HepG2 (cell line): ENCODE measurements at regions of chr20 and their contacts with region 1.

Region 1: DNA sequence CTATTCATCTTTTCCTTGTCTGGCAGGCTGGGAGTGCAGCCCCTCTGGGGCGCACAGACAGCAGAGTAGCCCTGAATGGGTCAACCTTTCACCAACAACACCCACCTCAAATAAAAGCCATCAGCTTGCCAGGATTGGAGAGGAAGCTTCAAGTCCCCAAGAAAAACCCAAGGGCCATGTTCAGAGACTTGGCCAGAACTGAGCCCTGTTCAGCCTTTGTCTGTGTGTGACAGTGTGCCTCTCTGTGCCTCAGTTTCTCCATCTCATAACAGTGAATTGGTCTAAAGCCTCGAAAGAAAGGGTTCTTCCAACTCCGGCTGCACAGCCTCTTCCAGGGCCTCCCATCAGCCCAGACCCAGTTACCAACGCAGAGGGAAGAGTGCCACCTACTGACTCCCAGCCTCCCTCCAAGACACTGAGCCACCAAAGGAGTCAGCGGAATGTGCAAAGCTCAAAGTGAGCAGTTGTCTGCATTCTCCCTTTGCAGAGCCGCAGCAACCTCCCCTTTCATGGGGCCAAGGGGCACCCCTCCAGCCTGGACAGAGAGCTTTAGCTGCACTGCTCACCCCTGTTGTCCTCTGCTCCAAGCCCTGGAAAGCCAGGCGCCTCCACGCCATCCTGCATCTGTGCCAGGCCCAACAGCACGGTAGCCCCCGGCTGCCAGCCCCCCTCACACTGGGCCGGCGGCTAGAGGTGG is 82.7 kb upstream of the TOP1 start:
- DNase-seq: peak; percentile 72
- ATAC-seq: peak; percentile 99
- H3K4me3 ChIP-seq: no peak overlapping the region
- H3K27ac ChIP-seq: no peak overlapping the region
- H3K4me1 ChIP-seq: peaks cover 11% of the 10 kb centered on the region
- H3K27me3 ChIP-seq: peaks cover 0 to 13% of the 10 kb centered on the region in 2 experiments; a peak in 2 of 5 replicates
- CTCF ChIP-seq: peak; percentile 98
- EP300 ChIP-seq: 0 out of 4 replicates have a peak, but pooled peaks of 1 of the 2 experiments have one; percentile 24
- POLR2A ChIP-seq: no peak
- RAD21 ChIP-seq: peak; percentile 93

Region 2: DNA sequence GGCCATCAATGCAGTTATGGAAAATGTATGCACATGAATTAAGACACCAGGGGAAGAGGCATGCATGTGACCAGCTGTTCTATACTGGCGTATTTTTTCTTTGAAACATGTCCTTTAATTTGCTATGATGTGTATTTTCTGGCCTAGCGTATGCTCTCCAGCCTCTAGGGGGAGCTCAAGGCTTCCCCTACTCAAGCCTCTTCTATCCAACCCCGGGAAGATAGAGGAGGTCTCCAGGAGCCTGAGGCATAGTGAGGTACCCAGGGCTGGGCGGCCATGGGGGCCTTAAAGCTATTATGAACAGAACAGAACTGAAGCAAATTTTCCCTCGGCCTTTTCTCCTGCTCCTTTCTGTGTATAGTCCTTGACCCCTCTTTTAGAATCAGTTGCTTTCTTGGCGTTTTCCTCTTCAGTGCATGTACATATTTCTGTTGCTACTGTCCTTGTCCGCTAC is 785.8 kb before region 1 on chr20:
- CTCF ChIA-PET with region 1: no interaction called
- POLR2A ChIA-PET with region 1: no interaction called
- in situ Hi-C with region 1: no loop called
- intact Hi-C with region 1: loop called (anchors 5 kb)
- DNase-seq: peak; percentile 60
- ATAC-seq: peak; percentile 99
- H3K4me3 ChIP-seq: no peak overlapping the region
- H3K27ac ChIP-seq: no peak overlapping the region
- H3K4me1 ChIP-seq: no peaks in the 10 kb centered on the region
- H3K27me3 ChIP-seq: no peaks in the 10 kb centered on the region
- CTCF ChIP-seq: peak; percentile 73
- EP300 ChIP-seq: no peak
- POLR2A ChIP-seq: no peak
- RAD21 ChIP-seq: no peak

Region 3: DNA sequence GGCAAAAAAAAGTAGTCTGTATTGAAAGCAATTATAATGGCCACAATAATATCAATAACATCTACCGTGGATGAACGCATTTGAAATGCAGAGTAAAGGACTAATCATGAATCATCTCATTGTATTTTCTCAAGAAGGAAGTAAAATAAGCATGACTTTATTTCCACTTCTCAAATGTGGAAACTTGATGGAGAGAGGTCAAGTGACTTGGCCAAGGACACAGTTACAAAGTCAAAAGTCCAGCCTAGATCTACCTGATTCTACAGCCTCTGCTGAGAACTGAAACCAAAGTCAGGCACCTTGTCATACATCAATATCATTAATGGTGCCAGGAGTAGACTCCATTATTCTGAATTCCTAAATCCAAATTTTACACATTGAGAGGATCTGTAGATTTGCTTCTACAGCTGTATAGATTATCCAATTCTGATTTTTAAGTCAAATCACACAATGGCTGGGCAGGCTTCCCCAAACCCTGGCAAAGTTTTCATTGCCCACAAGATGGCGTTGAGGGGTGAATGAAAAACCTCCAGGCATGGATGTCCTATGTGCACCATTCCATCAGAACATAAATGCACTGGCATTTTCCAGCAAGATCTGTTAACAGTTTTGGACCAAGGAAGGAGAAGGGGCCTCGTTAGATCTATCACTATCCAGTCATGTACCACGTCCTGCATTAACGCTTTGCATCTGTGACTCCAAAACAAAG is 679.9 kb before region 1 on chr20:
- CTCF ChIA-PET with region 1: no interaction called
- POLR2A ChIA-PET with region 1: no interaction called
- in situ Hi-C with region 1: no loop called
- intact Hi-C with region 1: loop called (anchors 5 kb)
- DNase-seq: peak; percentile 35
- ATAC-seq: peak; percentile 85
- H3K4me3 ChIP-seq: no peak overlapping the region
- H3K27ac ChIP-seq: no peak overlapping the region
- H3K4me1 ChIP-seq: no peaks in the 10 kb centered on the region
- H3K27me3 ChIP-seq: no peaks in the 10 kb centered on the region
- CTCF ChIP-seq: peak; percentile 56
- EP300 ChIP-seq: no peak
- POLR2A ChIP-seq: no peak
- RAD21 ChIP-seq: no peak; the same call in 1 of the 2 replicates

Region 4: GRCh38 chr20:40706977-40707582 is 238.8 kb before region 1 on chr20:
- CTCF ChIA-PET with region 1: no interaction called
- POLR2A ChIA-PET with region 1: no interaction called
- in situ Hi-C with region 1: no loop called
- intact Hi-C with region 1: loop called (anchors 2 kb)
- DNase-seq: peak; percentile 91
- ATAC-seq: peak; percentile 100
- H3K4me3 ChIP-seq: peak overlapping the region in 2 of 3 experiments; percentile 3 to 32; a peak in 2 of 6 replicates
- H3K27ac ChIP-seq: peak overlapping the region; percentile 19
- H3K4me1 ChIP-seq: peaks cover 21% of the 10 kb centered on the region
- H3K27me3 ChIP-seq: peaks cover 0 to 7% of the 10 kb centered on the region in 2 experiments; a peak in 2 of 5 replicates
- CTCF ChIP-seq: peak; percentile 65
- EP300 ChIP-seq: no peak; a peak in 2 of 4 replicates
- POLR2A ChIP-seq: no peak
- RAD21 ChIP-seq: peak; percentile 68; the same call in 1 of the 2 replicates

Region 5: GRCh38 chr20:40741507-40742106 is 204.3 kb before region 1 on chr20:
- CTCF ChIA-PET with region 1: interaction called, 11 read pairs
- POLR2A ChIA-PET with region 1: no interaction called
- in situ Hi-C with region 1: loop called (anchors 5 kb)
- intact Hi-C with region 1: loop called (anchors 1 kb)
- DNase-seq: peak; percentile 57
- ATAC-seq: peak; percentile 86
- H3K4me3 ChIP-seq: no peak overlapping the region
- H3K27ac ChIP-seq: no peak overlapping the region
- H3K4me1 ChIP-seq: no peaks in the 10 kb centered on the region
- H3K27me3 ChIP-seq: peaks cover 3 to 32% of the 10 kb centered on the region in 2 experiments; a peak in 3 of 5 replicates
- CTCF ChIP-seq: peak; percentile 83
- EP300 ChIP-seq: no peak
- POLR2A ChIP-seq: no peak
- RAD21 ChIP-seq: peak; percentile 59

Region 6: GRCh38 chr20:40797425-40797824 is 148.5 kb before region 1 on chr20:
- CTCF ChIA-PET with region 1: interaction called, 16 read pairs
- POLR2A ChIA-PET with region 1: no interaction called
- in situ Hi-C with region 1: loop called (anchors 5 kb)
- intact Hi-C with region 1: loop called (anchors 1 kb)
- DNase-seq: peak; percentile 41
- ATAC-seq: peak; percentile 87
- H3K4me3 ChIP-seq: no peak overlapping the region
- H3K27ac ChIP-seq: no peak overlapping the region
- H3K4me1 ChIP-seq: no peaks in the 10 kb centered on the region
- H3K27me3 ChIP-seq: no peaks in the 10 kb centered on the region
- CTCF ChIP-seq: peak; percentile 68
- EP300 ChIP-seq: no peak
- POLR2A ChIP-seq: no peak
- RAD21 ChIP-seq: no peak

Region 7: GRCh38 chr20:40802886-40803285 is 143.0 kb before region 1 on chr20:
- CTCF ChIA-PET with region 1: interaction called, 16 read pairs
- POLR2A ChIA-PET with region 1: no interaction called
- in situ Hi-C with region 1: loop called (anchors 5 kb)
- intact Hi-C with region 1: no loop called
- DNase-seq: no peak
- ATAC-seq: no peak
- H3K4me3 ChIP-seq: no peak overlapping the region
- H3K27ac ChIP-seq: no peak overlapping the region
- H3K4me1 ChIP-seq: no peaks in the 10 kb centered on the region
- H3K27me3 ChIP-seq: peaks cover 5 to 20% of the 10 kb centered on the region in 2 experiments; a peak in 4 of 5 replicates
- CTCF ChIP-seq: no peak
- EP300 ChIP-seq: no peak
- POLR2A ChIP-seq: no peak
- RAD21 ChIP-seq: no peak

Region 8: GRCh38 chr20:40880063-40880728 is 65.7 kb before region 1 on chr20:
- CTCF ChIA-PET with region 1: no interaction called
- POLR2A ChIA-PET with region 1: no interaction called
- in situ Hi-C with region 1: no loop called
- intact Hi-C with region 1: no loop called
- DNase-seq: no peak
- ATAC-seq: peak; percentile 52
- H3K4me3 ChIP-seq: no peak overlapping the region
- H3K27ac ChIP-seq: no peak overlapping the region
- H3K4me1 ChIP-seq: no peaks in the 10 kb centered on the region
- H3K27me3 ChIP-seq: peaks cover under 1 to 4% of the 10 kb centered on the region in 2 experiments; a peak in 2 of 5 replicates
- CTCF ChIP-seq: no peak
- EP300 ChIP-seq: no peak
- POLR2A ChIP-seq: no peak
- RAD21 ChIP-seq: no peak

Region 9: GRCh38 chr20:40922865-40923264 is 23.0 kb before region 1 on chr20:
- CTCF ChIA-PET with region 1: no interaction called
- POLR2A ChIA-PET with region 1: no interaction called
- in situ Hi-C with region 1: no loop called
- intact Hi-C with region 1: no loop called
- DNase-seq: no peak
- ATAC-seq: no peak
- H3K4me3 ChIP-seq: no peak overlapping the region
- H3K27ac ChIP-seq: no peak overlapping the region
- H3K4me1 ChIP-seq: no peaks in the 10 kb centered on the region
- H3K27me3 ChIP-seq: peaks cover 2 to 12% of the 10 kb centered on the region in 2 experiments; a peak in 3 of 5 replicates
- CTCF ChIP-seq: no peak
- EP300 ChIP-seq: no peak
- POLR2A ChIP-seq: no peak
- RAD21 ChIP-seq: no peak